Colonic mucosa (tissue), 4 donors: ENCODE measurements at regions of chr3 and their contacts with region 1.

Region 1: DNA sequence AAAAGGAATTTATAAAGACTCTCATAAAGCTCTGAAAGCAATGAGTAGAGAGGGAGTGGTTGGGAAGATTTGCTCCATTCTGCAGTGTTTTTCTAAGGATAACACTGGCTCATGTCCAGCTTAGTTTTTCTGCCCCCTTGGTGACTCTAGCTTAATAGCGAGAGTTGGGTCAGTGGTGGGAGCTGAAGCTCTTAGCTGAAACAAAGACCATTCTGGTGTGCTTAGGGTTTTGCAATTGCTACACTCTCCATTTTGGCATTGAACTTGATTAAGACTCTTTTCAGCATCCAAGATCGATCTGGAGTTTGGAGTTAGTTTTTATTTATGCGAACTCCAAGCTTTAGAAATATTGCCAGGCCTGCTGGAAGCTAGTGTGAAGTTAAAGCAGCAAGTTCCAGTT is 98.0 kb downstream of the ATG7 start:
- DNase-seq: no peak
- H3K4me3 ChIP-seq: no peak overlapping the region
- H3K27ac ChIP-seq: no peak overlapping the region
- H3K4me1 ChIP-seq: no peaks in the 10 kb centered on the region
- H3K27me3 ChIP-seq: no peaks in the 10 kb centered on the region
- CTCF ChIP-seq: no peak

Region 2: DNA sequence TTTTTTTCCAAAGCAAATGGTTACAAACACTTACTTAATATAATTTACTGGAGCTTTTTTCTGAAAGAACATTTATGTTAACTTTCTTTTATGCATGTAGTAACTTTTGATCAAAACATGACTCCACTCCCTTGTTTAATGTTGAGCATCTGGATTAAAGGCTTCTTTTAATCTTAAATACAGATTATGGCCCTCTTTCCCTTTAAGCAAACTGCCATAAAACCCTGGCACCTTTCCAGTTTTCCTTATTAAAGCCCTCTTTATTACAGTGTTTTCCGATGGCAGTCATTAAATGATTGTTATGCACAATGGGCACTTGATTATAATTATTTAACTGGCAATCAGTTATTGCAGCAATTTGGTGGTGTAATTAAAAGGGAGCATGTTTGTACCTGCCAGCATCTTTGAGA is 106.5 kb after region 1 on chr3:
- intact Hi-C with region 1: no loop called
- DNase-seq: peak; percentile 32
- H3K4me3 ChIP-seq: no peak overlapping the region
- H3K27ac ChIP-seq: no peak overlapping the region
- H3K4me1 ChIP-seq: peaks cover 5% of the 10 kb centered on the region
- H3K27me3 ChIP-seq: no peaks in the 10 kb centered on the region
- CTCF ChIP-seq: no peak

Region 3: DNA sequence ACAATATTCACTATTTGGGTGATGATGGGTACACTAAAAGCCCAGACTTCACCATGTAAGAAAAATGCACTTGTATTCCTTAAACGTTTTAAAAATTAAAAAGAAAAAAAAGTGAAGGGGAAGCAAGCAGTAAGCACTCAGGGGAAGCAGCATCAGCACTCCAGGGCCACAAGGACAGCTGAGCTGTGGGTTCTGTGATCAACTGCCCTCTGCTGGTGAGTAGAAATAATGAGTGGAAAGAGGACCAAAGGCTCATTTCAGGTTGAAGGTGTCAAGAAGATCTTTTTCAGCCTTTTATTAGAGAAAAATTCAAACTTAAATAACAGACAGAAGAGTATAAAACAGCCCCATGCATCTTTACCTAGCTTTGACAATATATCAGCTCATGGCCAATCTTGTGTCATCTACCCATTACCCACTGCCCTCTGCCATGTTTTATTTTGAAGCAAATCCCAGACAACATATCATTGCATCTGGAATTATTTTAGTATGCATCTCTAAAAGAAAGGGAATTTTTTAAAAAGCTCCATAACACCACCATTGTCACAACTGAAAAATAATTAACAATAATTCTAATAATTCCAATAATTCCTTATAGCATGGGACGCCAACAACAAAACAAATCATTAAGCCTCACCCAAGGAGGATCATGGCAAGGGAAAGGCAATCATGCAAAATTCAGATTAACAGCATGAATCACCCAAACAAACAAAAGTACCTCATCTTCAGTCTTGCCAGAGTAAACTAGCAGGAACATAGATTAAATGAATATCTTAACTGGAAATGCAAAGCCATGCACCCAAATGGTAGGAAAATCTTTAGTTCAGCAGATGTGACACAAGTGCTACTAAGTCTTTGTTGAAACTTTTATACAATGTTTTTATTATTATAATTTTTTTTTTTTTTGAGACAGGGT is 434.0 kb after region 1 on chr3:
- intact Hi-C with region 1: loop called (anchors 5 kb)
- DNase-seq: peak; percentile 39
- H3K4me3 ChIP-seq: no peak overlapping the region
- H3K27ac ChIP-seq: no peak overlapping the region
- H3K4me1 ChIP-seq: no peaks in the 10 kb centered on the region
- H3K27me3 ChIP-seq: no peaks in the 10 kb centered on the region
- CTCF ChIP-seq: peak; percentile 67